ENCODE measurements at regions of chr7 and their contacts with region 1.

Region 1: GRCh38 chr7:105013221-105013815 is 687 bp upstream of the KMT2E start:
- DNase-seq: peak; percentile 89
- ATAC-seq: peak; percentile 69
- H3K4me3 ChIP-seq: peak overlapping the region; percentile 78
- H3K27ac ChIP-seq: peak overlapping the region; percentile 95
- H3K4me1 ChIP-seq: peaks cover 31% of the 10 kb centered on the region
- H3K27me3 ChIP-seq: no peaks in the 10 kb centered on the region
- CTCF ChIP-seq: peak; percentile 40; the same call in 1 of the 2 replicates

Region 2: GRCh38 chr7:104945599-104945956 is 67.7 kb before region 1 on chr7:
- CTCF ChIA-PET with region 1: no interaction called
- POLR2A ChIA-PET with region 1: no interaction called
- intact Hi-C with region 1: loop called (anchors 1 kb)
- DNase-seq: no peak
- ATAC-seq: no peak
- H3K4me3 ChIP-seq: peak overlapping the region; percentile 32; the same call in 1 of the 2 replicates
- H3K27ac ChIP-seq: peak overlapping the region; percentile 100
- H3K4me1 ChIP-seq: peaks cover 18% of the 10 kb centered on the region
- H3K27me3 ChIP-seq: no peaks in the 10 kb centered on the region
- CTCF ChIP-seq: no peak

Region 3: DNA sequence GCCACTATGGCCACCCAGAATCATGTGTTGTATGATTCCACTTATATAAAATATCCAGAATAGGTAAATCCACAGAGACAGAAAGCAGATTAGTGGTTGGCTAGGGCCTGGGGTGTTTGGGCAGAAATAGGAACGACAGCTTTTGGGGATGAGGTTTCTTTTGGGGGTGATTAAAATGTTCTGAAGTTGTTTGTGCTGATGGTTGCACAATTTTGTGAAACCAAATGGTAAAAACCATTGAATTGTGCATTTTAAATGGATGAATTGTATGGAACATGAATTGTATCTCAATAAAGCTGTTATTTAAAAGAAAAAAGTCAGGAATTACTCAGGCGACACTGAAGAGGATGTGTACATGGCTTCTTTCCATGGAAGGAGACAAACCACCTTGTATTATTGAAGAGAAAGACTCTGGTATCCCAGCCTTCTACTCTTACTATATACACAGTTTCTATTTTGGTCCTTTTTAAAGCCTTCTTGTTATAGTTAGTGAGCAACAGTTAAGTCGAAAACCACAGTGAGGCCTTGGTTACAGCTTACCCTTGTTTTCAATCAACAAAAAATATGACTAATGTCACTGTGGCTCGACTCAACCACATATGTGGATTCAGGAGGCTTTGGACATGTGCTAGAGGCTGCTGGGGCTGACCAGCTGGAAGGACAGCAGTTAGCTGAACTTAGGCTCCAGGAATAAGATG is 56.4 kb before region 1 on chr7:
- CTCF ChIA-PET with region 1: no interaction called
- POLR2A ChIA-PET with region 1: interaction called, 3 read pairs
- intact Hi-C with region 1: loop called (anchors 1 kb)
- DNase-seq: peak; percentile 84
- ATAC-seq: peak; percentile 95
- H3K4me3 ChIP-seq: no peak overlapping the region
- H3K27ac ChIP-seq: peak overlapping the region; percentile 89
- H3K4me1 ChIP-seq: peaks cover 14% of the 10 kb centered on the region
- H3K27me3 ChIP-seq: no peaks in the 10 kb centered on the region
- CTCF ChIP-seq: no peak

Region 4: GRCh38 chr7:105036217-105037168 is 23.2 kb after region 1 on chr7:
- CTCF ChIA-PET with region 1: interaction called, 4 read pairs
- POLR2A ChIA-PET with region 1: no interaction called
- intact Hi-C with region 1: loop called (anchors 2 kb)
- DNase-seq: no peak
- ATAC-seq: no peak
- H3K4me3 ChIP-seq: no peak overlapping the region
- H3K27ac ChIP-seq: no peak overlapping the region
- H3K4me1 ChIP-seq: peaks cover 4% of the 10 kb centered on the region; the same call in 1 of the 2 replicates
- H3K27me3 ChIP-seq: no peaks in the 10 kb centered on the region
- CTCF ChIP-seq: no peak

Region 5: GRCh38 chr7:105060923-105061322 is 47.6 kb after region 1 on chr7:
- CTCF ChIA-PET with region 1: no interaction called
- POLR2A ChIA-PET with region 1: no interaction called
- intact Hi-C with region 1: no loop called
- DNase-seq: no peak
- ATAC-seq: no peak
- H3K4me3 ChIP-seq: no peak overlapping the region
- H3K27ac ChIP-seq: no peak overlapping the region
- H3K4me1 ChIP-seq: no peaks in the 10 kb centered on the region
- H3K27me3 ChIP-seq: no peaks in the 10 kb centered on the region
- CTCF ChIP-seq: no peak

Region 6: DNA sequence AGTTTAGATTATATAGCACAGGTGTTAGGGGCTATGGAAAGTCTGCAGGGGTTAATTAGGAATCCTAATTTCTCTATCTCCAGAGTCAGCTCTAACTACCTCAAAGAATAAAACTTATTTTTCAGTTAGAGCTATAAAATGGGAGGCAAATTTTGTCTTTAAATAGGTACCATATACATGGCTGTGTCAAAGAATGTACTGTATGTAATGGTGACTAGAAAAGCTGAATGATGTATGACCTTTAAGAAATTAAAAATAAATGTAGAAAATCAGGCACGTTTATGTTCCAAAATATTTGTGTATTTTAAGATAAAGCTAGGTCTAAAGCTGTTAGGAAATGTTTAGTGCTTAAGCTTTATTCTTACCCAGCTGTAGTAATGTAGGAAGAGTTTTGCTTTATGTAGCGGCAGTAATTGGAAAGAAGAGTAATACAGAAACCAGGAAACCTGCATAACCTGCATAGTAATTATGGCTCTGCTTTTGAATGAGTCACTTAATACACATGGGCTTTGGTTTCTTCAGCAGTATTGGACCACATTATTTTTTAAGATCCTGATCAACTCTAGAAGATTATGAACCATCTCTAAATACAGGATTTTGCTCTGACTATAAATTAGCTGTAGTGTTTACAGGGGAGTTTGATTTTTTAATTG is 85.7 kb after region 1 on chr7:
- CTCF ChIA-PET with region 1: no interaction called
- POLR2A ChIA-PET with region 1: interaction called, 15 read pairs
- intact Hi-C with region 1: loop called (anchors 2 kb)
- DNase-seq: peak; percentile 82
- ATAC-seq: peak; percentile 68
- H3K4me3 ChIP-seq: no peak overlapping the region
- H3K27ac ChIP-seq: peak overlapping the region; percentile 53
- H3K4me1 ChIP-seq: peaks cover 52% of the 10 kb centered on the region
- H3K27me3 ChIP-seq: no peaks in the 10 kb centered on the region
- CTCF ChIP-seq: no peak

Region 7: GRCh38 chr7:105388373-105389087 is 375.2 kb after region 1 on chr7 and contains the start of gene SRPK2:
- CTCF ChIA-PET with region 1: interaction called, 6 read pairs
- POLR2A ChIA-PET with region 1: no interaction called
- intact Hi-C with region 1: loop called (anchors 5 kb)
- DNase-seq: peak; percentile 59
- ATAC-seq: peak; percentile 80
- H3K4me3 ChIP-seq: peak within 1 kb of the TSS; percentile 94
- H3K27ac ChIP-seq: no peak within 1 kb of the TSS
- H3K4me1 ChIP-seq: peaks cover 8% of the 10 kb centered on the region; the same call in 1 of the 2 replicates
- H3K27me3 ChIP-seq: no peaks in the 10 kb centered on the region
- CTCF ChIP-seq: no peak
- total RNA-seq, gene SRPK2: 21.6 and 32.1 TPM in 2 replicates

Measured in PC-3 (cell line).